GM12878 (cell line): ENCODE measurements at regions of chr1 and their contacts with region 1.

Region 1: GRCh38 chr1:41573785-41574713 is 89.6 kb upstream of the EDN2 start:
- DNase-seq: peak; percentile 56
- ATAC-seq: peak; percentile 99
- H3K4me3 ChIP-seq: no peak overlapping the region
- H3K27ac ChIP-seq: no peak overlapping the region
- H3K4me1 ChIP-seq: peaks cover 14% of the 10 kb centered on the region
- H3K27me3 ChIP-seq: no peaks in the 10 kb centered on the region
- CTCF ChIP-seq: peak; percentile 95 to 98 (median 96); a peak in 5 of 6 replicates
- EP300 ChIP-seq: no peak
- POLR2A ChIP-seq: no peak
- RAD21 ChIP-seq: peak; percentile 99

Region 2: GRCh38 chr1:41484372-41485241 is 89.4 kb before region 1 on chr1 and contains the start of gene EDN2:
- CTCF ChIA-PET with region 1: no interaction called
- POLR2A ChIA-PET with region 1: no interaction called
- RAD21 ChIA-PET with region 1: no interaction called
- SMC1A ChIA-PET with region 1: no interaction called
- in situ Hi-C with region 1: no loop called
- intact Hi-C with region 1: no loop called
- DNase-seq: no peak
- ATAC-seq: peak; percentile 46
- H3K4me3 ChIP-seq: no peak within 1 kb of the TSS
- H3K27ac ChIP-seq: no peak within 1 kb of the TSS
- H3K4me1 ChIP-seq: peaks cover 40% of the 10 kb centered on the region
- H3K27me3 ChIP-seq: no peaks in the 10 kb centered on the region
- CTCF ChIP-seq: peak in 2 of 3 experiments; percentile 22 to 39; a peak in 4 of 6 replicates
- EP300 ChIP-seq: no peak
- POLR2A ChIP-seq: no peak
- RAD21 ChIP-seq: no peak
- polyA plus RNA-seq, gene EDN2: 0.11 TPM in 1 of 2 experiments, not detected in the other

Region 3: DNA sequence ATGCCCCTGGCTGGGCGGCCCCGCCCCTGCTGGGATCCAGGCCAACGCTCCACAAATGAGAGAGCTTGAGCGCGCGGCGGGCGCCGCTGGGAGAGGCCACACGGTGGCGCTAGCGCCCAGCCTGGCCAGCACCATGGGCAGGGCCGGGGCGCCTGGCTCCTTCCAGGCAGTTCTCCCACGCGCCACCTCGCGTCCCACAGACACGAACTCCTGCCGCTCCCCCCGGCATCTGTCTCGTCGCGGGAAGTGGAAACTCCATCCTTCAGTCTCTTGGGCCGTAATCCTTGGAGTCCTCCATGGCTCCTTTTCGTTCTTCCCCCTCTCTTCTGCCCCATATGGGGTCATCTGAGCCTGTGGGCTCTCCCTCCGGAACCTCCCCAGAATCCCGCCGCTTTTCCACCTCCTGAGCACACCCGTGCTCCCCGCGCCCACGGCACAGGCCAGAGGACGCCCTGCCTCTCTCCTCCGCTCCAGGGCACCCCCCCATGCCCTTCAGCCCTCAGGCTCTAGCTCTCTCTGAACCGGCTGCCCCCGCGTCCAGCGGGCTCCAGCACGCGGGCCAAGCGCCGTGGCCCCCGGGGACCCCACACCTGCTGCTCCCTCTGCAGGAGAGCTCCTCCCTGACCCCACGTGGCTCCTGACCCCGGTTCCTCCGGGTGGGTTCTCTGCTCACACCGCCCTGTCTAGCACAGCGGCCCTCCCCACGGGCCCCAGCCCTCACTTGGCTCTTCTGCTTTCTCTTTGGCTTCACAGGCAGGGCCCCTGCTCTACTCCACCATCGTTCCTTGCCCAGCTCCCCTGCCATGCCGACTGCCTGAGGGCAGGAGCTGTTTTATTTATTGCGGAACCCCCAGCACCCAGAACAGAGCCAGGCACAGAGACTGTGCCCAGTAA is 57.6 kb before region 1 on chr1:
- CTCF ChIA-PET with region 1: interaction called, 13 read pairs
- POLR2A ChIA-PET with region 1: no interaction called
- RAD21 ChIA-PET with region 1: interaction called, 6 read pairs
- SMC1A ChIA-PET with region 1: interaction called, 3 read pairs
- in situ Hi-C with region 1: no loop called
- intact Hi-C with region 1: no loop called
- DNase-seq: no peak
- ATAC-seq: peak; percentile 96
- H3K4me3 ChIP-seq: no peak overlapping the region
- H3K27ac ChIP-seq: no peak overlapping the region; the same call in 1 of the 2 replicates
- H3K4me1 ChIP-seq: peaks cover 6% of the 10 kb centered on the region; the same call in 1 of the 2 replicates
- H3K27me3 ChIP-seq: no peaks in the 10 kb centered on the region
- CTCF ChIP-seq: peak; percentile 86 to 93 (median 90)
- EP300 ChIP-seq: no peak
- POLR2A ChIP-seq: no peak
- RAD21 ChIP-seq: peak; percentile 71

Region 4: DNA sequence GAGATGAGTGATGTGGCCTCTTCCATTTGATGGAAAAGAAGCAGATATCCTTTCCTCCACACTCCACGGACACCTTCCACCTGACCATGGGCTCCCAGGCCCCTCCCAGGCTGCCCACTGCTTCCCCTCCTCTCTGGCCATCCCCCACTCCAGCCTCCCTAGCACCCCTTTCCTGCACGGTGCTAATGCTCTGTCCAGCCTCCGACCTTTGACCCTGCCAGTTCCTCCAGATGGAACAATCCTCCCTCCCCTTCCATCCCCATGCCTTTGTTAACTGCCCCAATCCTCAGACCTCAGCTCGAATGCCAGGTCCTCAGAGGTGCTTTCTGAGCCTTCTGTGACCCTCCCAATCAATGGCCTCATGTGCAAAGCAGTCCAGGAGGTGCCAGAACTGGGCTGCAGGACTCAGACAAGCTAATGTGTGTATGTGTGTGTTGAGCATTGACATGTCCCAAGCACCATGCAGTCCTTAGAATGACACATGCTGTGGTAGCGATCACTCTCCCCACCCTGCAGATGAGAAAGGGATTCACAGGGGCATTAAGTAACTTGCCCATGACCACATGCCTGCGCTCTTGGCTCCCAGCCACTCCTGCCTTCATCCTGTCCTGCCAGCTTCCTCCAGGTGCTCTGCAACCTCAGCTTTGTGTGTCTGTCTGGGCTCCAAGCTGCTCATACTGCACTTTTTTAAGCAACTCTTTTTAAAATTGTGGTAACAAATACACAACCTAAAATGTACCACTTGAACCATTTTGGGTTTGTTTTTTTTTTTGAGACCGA is 26.1 kb before region 1 on chr1:
- CTCF ChIA-PET with region 1: no interaction called
- POLR2A ChIA-PET with region 1: no interaction called
- RAD21 ChIA-PET with region 1: no interaction called
- SMC1A ChIA-PET with region 1: no interaction called
- in situ Hi-C with region 1: no loop called
- intact Hi-C with region 1: no loop called
- DNase-seq: no peak
- ATAC-seq: no peak; the same call in 2 of the 3 replicates
- H3K4me3 ChIP-seq: no peak overlapping the region
- H3K27ac ChIP-seq: no peak overlapping the region
- H3K4me1 ChIP-seq: no peaks in the 10 kb centered on the region
- H3K27me3 ChIP-seq: no peaks in the 10 kb centered on the region
- CTCF ChIP-seq: no peak
- EP300 ChIP-seq: no peak
- POLR2A ChIP-seq: no peak
- RAD21 ChIP-seq: no peak

Region 5: GRCh38 chr1:41662061-41662764 is 88.2 kb after region 1 on chr1:
- CTCF ChIA-PET with region 1: interaction called, 66 read pairs
- POLR2A ChIA-PET with region 1: no interaction called
- RAD21 ChIA-PET with region 1: interaction called, 58 read pairs
- SMC1A ChIA-PET with region 1: interaction called, 126 read pairs
- in situ Hi-C with region 1: no loop called
- intact Hi-C with region 1: loop called (anchors 2 kb)
- DNase-seq: no peak
- ATAC-seq: peak; percentile 74
- H3K4me3 ChIP-seq: peak overlapping the region; percentile 80
- H3K27ac ChIP-seq: peak overlapping the region; percentile 28; the same call in 1 of the 2 replicates
- H3K4me1 ChIP-seq: peaks cover 26% of the 10 kb centered on the region
- H3K27me3 ChIP-seq: no peaks in the 10 kb centered on the region
- CTCF ChIP-seq: no peak
- EP300 ChIP-seq: no peak
- POLR2A ChIP-seq: peak; percentile 35; the same call in 1 of the 2 replicates
- RAD21 ChIP-seq: no peak

Region 6: DNA sequence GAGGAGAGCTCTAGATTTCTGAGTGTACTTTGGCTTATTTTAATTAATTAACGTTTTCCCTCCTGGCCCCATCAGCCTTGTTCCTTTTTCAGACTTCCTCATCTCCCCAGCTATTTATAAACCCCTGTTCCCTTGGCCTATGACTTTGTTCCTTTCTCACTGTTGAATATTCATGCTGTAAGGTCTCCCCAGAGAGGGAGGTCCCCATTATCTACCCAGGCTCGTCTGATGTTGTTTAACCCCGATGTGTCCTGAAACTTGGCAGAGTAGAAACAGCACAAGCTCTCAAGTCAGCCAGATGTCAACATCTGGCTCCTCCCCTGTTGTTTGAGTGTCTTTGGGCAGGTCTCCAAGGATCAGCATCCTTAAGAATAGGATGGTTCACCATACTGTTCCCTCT is 191.1 kb after region 1 on chr1:
- CTCF ChIA-PET with region 1: interaction called, 16 read pairs
- POLR2A ChIA-PET with region 1: no interaction called
- RAD21 ChIA-PET with region 1: interaction called, 8 read pairs
- SMC1A ChIA-PET with region 1: interaction called, 3 read pairs
- in situ Hi-C with region 1: no loop called
- intact Hi-C with region 1: loop called (anchors 5 kb)
- DNase-seq: no peak
- ATAC-seq: peak; percentile 62
- H3K4me3 ChIP-seq: no peak overlapping the region
- H3K27ac ChIP-seq: no peak overlapping the region
- H3K4me1 ChIP-seq: peaks cover 28% of the 10 kb centered on the region
- H3K27me3 ChIP-seq: no peaks in the 10 kb centered on the region
- CTCF ChIP-seq: no peak
- EP300 ChIP-seq: no peak
- POLR2A ChIP-seq: no peak
- RAD21 ChIP-seq: no peak

Region 7: DNA sequence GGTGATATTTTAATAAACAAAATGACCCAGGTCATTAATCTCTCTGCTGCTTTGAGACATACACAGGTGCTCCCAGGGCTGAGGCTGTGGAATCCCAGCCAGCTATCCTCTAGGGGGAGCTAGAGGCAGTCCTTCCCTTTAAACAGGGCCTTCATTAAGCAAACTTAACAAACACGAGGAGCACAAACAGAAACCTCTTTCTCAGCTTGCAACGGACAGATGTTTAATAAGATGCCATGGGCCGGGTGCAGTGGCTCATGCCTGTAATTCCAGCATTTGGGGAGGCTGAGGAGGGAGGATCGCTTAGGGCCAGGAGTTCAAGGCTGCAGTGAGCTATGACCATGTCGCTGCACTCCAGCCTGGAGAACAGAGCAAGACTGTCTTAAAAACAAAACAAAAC is 238.0 kb after region 1 on chr1:
- CTCF ChIA-PET with region 1: interaction called, 35 read pairs
- POLR2A ChIA-PET with region 1: interaction called, 3 read pairs
- RAD21 ChIA-PET with region 1: interaction called, 42 read pairs
- SMC1A ChIA-PET with region 1: interaction called, 36 read pairs
- in situ Hi-C with region 1: no loop called
- intact Hi-C with region 1: loop called (anchors 2 kb)
- DNase-seq: no peak
- ATAC-seq: peak; percentile 70
- H3K4me3 ChIP-seq: no peak overlapping the region
- H3K27ac ChIP-seq: no peak overlapping the region
- H3K4me1 ChIP-seq: peaks cover 43% of the 10 kb centered on the region
- H3K27me3 ChIP-seq: no peaks in the 10 kb centered on the region
- CTCF ChIP-seq: peak; percentile 67 to 72 (median 70)
- EP300 ChIP-seq: no peak
- POLR2A ChIP-seq: no peak
- RAD21 ChIP-seq: peak; percentile 77

Region 8: GRCh38 chr1:42035830-42036604 is 462.0 kb after region 1 on chr1:
- CTCF ChIA-PET with region 1: no interaction called
- POLR2A ChIA-PET with region 1: no interaction called
- RAD21 ChIA-PET with region 1: interaction called, 4 read pairs
- SMC1A ChIA-PET with region 1: interaction called, 4 read pairs
- in situ Hi-C with region 1: loop called (anchors 10 kb)
- intact Hi-C with region 1: loop called (anchors 5 kb)
- DNase-seq: peak; percentile 55
- ATAC-seq: peak; percentile 90
- H3K4me3 ChIP-seq: peak overlapping the region; percentile 93
- H3K27ac ChIP-seq: peak overlapping the region; percentile 37; the same call in 1 of the 2 replicates
- H3K4me1 ChIP-seq: peaks cover 8% of the 10 kb centered on the region; the same call in 1 of the 2 replicates
- H3K27me3 ChIP-seq: no peaks in the 10 kb centered on the region; a peak in 1 of 4 replicates
- CTCF ChIP-seq: no peak
- EP300 ChIP-seq: no peak
- POLR2A ChIP-seq: peak; percentile 63; the same call in 1 of the 2 replicates
- RAD21 ChIP-seq: no peak